CD8-positive, alpha-beta T cell (primary cell): ENCODE measurements at regions of chr12 and their contacts with region 1.

Region 1: GRCh38 chr12:121443193-121443870 is 43.4 kb downstream of the RNF34 start:
- DNase-seq: peak; percentile 43 to 74 (median 67)
- ATAC-seq: peak; percentile 80
- H3K4me3 ChIP-seq: no peak overlapping the region
- H3K4me3 Mint-ChIP-seq: no peak overlapping the region
- H3K27ac ChIP-seq: no peak overlapping the region
- H3K27ac Mint-ChIP-seq: peak overlapping the region; percentile 79
- H3K4me1 ChIP-seq: no peaks in the 10 kb centered on the region
- H3K4me1 Mint-ChIP-seq: peaks cover 5% of the 10 kb centered on the region
- H3K27me3 ChIP-seq: no peaks in the 10 kb centered on the region
- H3K27me3 Mint-ChIP-seq: no peaks in the 10 kb centered on the region
- CTCF ChIP-seq: peak; percentile 76

Region 2: GRCh38 chr12:121420099-121420498 is 23.2 kb before region 1 on chr12:
- CTCF ChIA-PET with region 1: interaction called, 18 read pairs
- POLR2A ChIA-PET with region 1: no interaction called
- intact Hi-C with region 1: no loop called
- DNase-seq: no peak
- ATAC-seq: no peak
- H3K4me3 ChIP-seq: no peak overlapping the region
- H3K4me3 Mint-ChIP-seq: no peak overlapping the region
- H3K27ac ChIP-seq: no peak overlapping the region
- H3K27ac Mint-ChIP-seq: no peak overlapping the region
- H3K4me1 ChIP-seq: peaks cover 6% of the 10 kb centered on the region
- H3K4me1 Mint-ChIP-seq: peaks cover 13% of the 10 kb centered on the region
- H3K27me3 ChIP-seq: no peaks in the 10 kb centered on the region
- H3K27me3 Mint-ChIP-seq: no peaks in the 10 kb centered on the region
- CTCF ChIP-seq: no peak

Region 3: DNA sequence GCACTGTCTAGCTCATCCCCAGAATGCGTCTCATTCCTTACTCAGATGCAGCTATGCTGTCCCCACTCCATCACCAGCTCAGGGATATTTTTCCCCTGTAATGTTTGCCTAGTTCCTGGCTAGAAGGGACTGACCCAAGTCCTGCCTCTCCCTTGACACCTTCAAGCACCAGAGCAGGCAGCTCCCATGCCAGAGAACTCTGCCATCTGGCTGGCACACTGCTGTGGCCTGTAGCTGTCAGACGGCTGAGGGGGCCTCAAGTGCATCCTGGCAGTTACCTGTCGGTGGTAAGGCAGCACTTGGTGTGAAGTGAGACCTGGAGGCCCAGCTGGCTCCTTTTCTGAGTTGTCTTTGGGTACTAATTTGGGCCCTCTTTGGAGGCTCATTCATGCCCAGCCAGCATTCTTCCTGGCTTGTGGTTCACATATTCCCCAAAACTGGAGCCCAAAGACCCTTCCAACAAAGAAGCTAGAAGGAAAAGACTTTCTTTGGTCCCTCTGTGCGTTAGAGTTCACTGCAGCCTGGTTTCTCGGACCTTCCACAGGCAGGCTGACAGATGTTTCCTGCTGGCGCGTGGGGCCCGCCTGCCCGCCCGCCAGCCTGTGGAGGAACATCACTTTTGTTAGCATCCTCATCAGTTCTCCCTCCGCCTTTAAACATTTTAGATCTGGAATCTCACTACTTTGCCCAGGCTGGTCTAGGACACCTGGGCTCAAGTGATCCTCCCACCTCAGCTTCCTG is 10.4 kb before region 1 on chr12:
- CTCF ChIA-PET with region 1: interaction called, 14 read pairs
- POLR2A ChIA-PET with region 1: interaction called, 4 read pairs
- intact Hi-C with region 1: no loop called
- DNase-seq: peak in 1 of 9 experiments; percentile 46
- ATAC-seq: no peak
- H3K4me3 ChIP-seq: no peak overlapping the region
- H3K4me3 Mint-ChIP-seq: no peak overlapping the region
- H3K27ac ChIP-seq: no peak overlapping the region
- H3K27ac Mint-ChIP-seq: peak overlapping the region; percentile 32
- H3K4me1 ChIP-seq: no peaks in the 10 kb centered on the region
- H3K4me1 Mint-ChIP-seq: no peaks in the 10 kb centered on the region
- H3K27me3 ChIP-seq: no peaks in the 10 kb centered on the region
- H3K27me3 Mint-ChIP-seq: no peaks in the 10 kb centered on the region
- CTCF ChIP-seq: no peak

Region 4: DNA sequence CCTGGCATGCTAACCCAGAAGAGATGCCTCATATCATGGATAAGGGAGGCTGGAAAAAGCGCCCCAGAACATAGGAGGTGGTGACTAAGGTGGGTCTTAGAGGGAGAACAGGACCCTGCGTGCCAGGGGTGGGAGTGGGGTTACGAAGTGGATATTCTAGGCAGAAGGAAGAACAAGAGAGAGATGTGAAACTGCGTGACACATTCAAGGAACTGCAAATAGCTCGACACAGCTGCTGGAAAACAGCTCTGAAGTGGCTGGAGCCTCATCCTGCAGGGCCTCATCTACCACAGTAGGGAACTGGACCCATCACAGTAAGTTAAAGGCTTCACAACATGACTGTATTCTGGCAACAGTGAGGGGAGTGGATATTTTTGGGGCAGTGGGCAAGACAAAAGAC is 17.7 kb after region 1 on chr12:
- CTCF ChIA-PET with region 1: interaction called, 15 read pairs
- POLR2A ChIA-PET with region 1: interaction called, 3 read pairs
- intact Hi-C with region 1: no loop called
- DNase-seq: no peak
- ATAC-seq: no peak
- H3K4me3 ChIP-seq: no peak overlapping the region
- H3K4me3 Mint-ChIP-seq: no peak overlapping the region
- H3K27ac ChIP-seq: no peak overlapping the region
- H3K27ac Mint-ChIP-seq: no peak overlapping the region
- H3K4me1 ChIP-seq: peaks cover 17% of the 10 kb centered on the region
- H3K4me1 Mint-ChIP-seq: peaks cover 47% of the 10 kb centered on the region
- H3K27me3 ChIP-seq: no peaks in the 10 kb centered on the region
- H3K27me3 Mint-ChIP-seq: no peaks in the 10 kb centered on the region
- CTCF ChIP-seq: no peak